Calu3 (cell line): ENCODE measurements at regions of chr6 and their contacts with region 1.

Region 1: GRCh38 chr6:81241126-81242041 is 511.1 kb downstream of the TENT5A start:
- DNase-seq: no peak
- H3K4me3 Mint-ChIP-seq: no peak overlapping the region
- H3K27ac Mint-ChIP-seq: no peak overlapping the region
- H3K4me1 Mint-ChIP-seq: no peaks in the 10 kb centered on the region
- H3K27me3 Mint-ChIP-seq: no peaks in the 10 kb centered on the region
- CTCF ChIP-seq: peak; percentile 10

Region 2: GRCh38 chr6:81075974-81076373 is 165.4 kb before region 1 on chr6:
- CTCF ChIA-PET with region 1: no interaction called
- intact Hi-C with region 1: no loop called
- DNase-seq: no peak
- H3K4me3 Mint-ChIP-seq: no peak overlapping the region
- H3K27ac Mint-ChIP-seq: no peak overlapping the region
- H3K4me1 Mint-ChIP-seq: no peaks in the 10 kb centered on the region
- H3K27me3 Mint-ChIP-seq: no peaks in the 10 kb centered on the region
- CTCF ChIP-seq: peak; percentile 30

Region 3: DNA sequence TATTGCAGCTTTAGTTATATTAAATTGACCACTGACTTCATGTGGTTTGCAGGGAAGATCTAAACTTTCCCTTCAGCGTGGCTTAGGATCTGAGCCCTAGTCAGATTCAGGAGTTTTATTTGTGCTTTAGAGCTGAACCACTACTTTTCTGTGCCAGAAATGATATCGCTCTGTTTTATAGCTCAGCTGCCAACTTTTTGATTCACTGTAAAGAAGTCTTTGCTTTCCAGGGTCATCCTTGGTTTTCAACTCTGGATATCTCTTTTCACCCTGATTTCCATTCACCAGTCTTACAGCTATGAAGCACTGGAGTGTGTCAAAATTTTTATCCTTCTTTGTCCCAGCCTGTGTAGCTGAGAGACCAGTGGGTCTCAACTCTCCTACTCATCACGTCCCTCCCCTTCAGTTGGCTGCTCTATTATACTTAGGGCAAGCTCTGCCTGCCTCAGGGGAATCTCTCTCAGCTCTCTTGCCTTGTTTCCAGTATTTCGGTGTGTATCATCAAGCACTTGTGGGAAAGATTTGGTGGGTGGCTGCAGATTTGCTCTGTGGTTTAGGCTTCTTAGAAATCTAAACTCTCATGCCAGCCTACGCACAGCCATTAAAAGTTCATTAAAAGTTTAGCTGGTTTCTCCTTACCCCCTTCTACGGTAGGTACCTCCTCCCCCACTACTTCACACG is 85.6 kb after region 1 on chr6:
- CTCF ChIA-PET with region 1: no interaction called
- intact Hi-C with region 1: no loop called
- DNase-seq: no peak
- H3K4me3 Mint-ChIP-seq: no peak overlapping the region
- H3K27ac Mint-ChIP-seq: no peak overlapping the region
- H3K4me1 Mint-ChIP-seq: no peaks in the 10 kb centered on the region
- H3K27me3 Mint-ChIP-seq: no peaks in the 10 kb centered on the region
- CTCF ChIP-seq: no peak

Region 4: DNA sequence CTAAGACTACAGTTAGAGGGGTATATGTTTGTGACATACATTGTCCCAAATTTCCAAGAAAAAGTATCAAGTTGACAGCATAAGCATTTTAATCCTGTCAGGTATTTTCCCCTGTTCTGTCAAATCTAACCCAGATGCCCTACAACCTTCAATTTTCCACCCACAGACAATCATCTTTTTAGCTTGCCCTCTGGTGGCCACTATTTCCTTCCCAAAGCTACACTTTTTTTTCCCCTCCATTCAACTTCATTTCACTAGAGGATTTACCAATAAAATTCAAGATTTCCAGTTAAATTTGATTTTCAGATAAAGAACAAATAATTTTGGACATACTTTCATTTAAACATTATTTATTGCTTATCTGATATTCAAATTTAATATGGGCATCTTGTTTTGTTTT is 224.5 kb after region 1 on chr6:
- CTCF ChIA-PET with region 1: no interaction called
- intact Hi-C with region 1: loop called (anchors 10 kb)
- DNase-seq: peak; percentile 26
- H3K4me3 Mint-ChIP-seq: no peak overlapping the region
- H3K27ac Mint-ChIP-seq: no peak overlapping the region
- H3K4me1 Mint-ChIP-seq: no peaks in the 10 kb centered on the region
- H3K27me3 Mint-ChIP-seq: no peaks in the 10 kb centered on the region
- CTCF ChIP-seq: peak; percentile 61

Region 5: GRCh38 chr6:81487489-81487888 is 246.1 kb after region 1 on chr6:
- CTCF ChIA-PET with region 1: no interaction called
- intact Hi-C with region 1: no loop called
- DNase-seq: no peak
- H3K4me3 Mint-ChIP-seq: no peak overlapping the region
- H3K27ac Mint-ChIP-seq: no peak overlapping the region
- H3K4me1 Mint-ChIP-seq: no peaks in the 10 kb centered on the region
- H3K27me3 Mint-ChIP-seq: no peaks in the 10 kb centered on the region
- CTCF ChIP-seq: no peak

Region 6: GRCh38 chr6:81787313-81788068 is 546.1 kb after region 1 on chr6:
- CTCF ChIA-PET with region 1: no interaction called
- intact Hi-C with region 1: no loop called
- DNase-seq: no peak
- H3K4me3 Mint-ChIP-seq: no peak overlapping the region
- H3K27ac Mint-ChIP-seq: peak overlapping the region; percentile 47
- H3K4me1 Mint-ChIP-seq: peaks cover 45% of the 10 kb centered on the region
- H3K27me3 Mint-ChIP-seq: no peaks in the 10 kb centered on the region
- CTCF ChIP-seq: no peak

Region 7: DNA sequence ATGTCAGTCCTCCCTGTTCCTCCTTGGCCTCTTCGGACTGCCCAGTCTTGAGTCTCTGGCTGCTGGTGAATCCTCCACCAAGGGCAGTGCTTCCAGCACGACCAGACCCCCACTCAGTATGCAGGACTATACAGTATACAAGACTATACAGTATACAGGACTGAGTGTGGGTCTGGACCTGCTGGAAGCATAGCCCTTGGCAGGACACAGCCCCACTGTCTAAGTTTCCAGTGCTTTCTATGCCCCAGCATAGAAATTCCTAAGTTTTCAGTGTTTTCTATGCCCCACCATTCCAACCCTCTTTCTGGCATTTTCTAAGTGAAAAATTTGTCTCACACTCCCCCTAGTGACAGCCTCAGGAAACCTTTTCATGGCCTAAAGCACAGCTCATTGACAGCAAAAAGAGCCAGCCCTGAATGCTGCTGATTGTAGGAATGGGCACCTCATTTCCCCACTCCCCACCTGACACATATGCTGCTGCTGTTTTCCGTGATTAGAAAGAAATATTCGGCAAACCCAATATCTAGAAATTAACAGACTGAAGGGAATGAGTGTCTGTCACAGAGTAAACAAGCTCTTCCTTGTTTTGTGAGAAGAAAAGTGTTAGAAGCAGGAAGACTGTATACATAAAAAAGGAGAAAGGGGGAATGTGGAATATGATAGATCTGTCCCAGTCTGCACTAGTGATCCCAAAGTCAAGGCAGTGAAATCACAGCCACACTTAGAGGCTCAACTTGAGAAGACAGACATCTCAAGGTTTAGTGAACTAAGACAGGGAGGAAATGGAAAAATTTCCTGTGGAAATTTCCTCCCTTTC is 799.2 kb after region 1 on chr6:
- CTCF ChIA-PET with region 1: no interaction called
- intact Hi-C with region 1: loop called (anchors 5 kb)
- DNase-seq: peak; percentile 48
- H3K4me3 Mint-ChIP-seq: no peak overlapping the region
- H3K27ac Mint-ChIP-seq: no peak overlapping the region
- H3K4me1 Mint-ChIP-seq: no peaks in the 10 kb centered on the region
- H3K27me3 Mint-ChIP-seq: no peaks in the 10 kb centered on the region
- CTCF ChIP-seq: peak; percentile 44